Adrenal gland (tissue), 19 donors: ENCODE measurements at regions of chr16 and their contacts with region 1.

Region 1: GRCh38 chr16:30112197-30113030 is 923 bp downstream of the GDPD3 start:
- DNase-seq: peak; percentile 56 to 82 (median 69)
- H3K4me3 ChIP-seq: no peak overlapping the region
- H3K27ac ChIP-seq: peak overlapping the region in 1 of 5 donors; percentile 74
- H3K4me1 ChIP-seq: peaks cover 0 to 16% of the 10 kb centered on the region in 2 donors
- H3K27me3 ChIP-seq: no peaks in the 10 kb centered on the region
- CTCF ChIP-seq: peak; percentile 46 to 82 (median 60)
- POLR2A ChIP-seq: no peak

Region 2: GRCh38 chr16:29645694-29646187 is 466.7 kb before region 1 on chr16:
- intact Hi-C with region 1: no loop called
- DNase-seq: no peak
- H3K4me3 ChIP-seq: no peak overlapping the region
- H3K27ac ChIP-seq: no peak overlapping the region
- H3K4me1 ChIP-seq: no peaks in the 10 kb centered on the region
- H3K27me3 ChIP-seq: no peaks in the 10 kb centered on the region
- CTCF ChIP-seq: no peak
- POLR2A ChIP-seq: no peak

Region 3: DNA sequence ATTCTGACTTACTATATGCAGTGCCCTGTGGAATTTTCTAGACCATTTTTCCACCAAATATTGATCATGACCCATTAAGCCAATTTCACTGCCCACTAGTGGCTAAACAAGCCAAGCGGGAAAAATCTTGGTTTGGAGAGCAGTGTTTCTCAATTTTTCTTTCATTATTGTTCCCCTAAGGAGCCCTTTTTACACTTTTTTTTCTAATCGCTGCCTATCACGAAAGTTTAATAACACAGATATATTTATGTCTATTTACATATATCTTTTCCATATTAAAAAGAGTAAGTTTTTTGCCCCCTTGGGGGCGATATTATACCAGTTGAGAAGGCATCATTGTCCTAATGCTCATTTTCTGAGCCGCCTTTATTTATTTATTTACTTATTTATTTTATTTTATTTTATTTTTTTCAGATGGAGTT is 70.6 kb before region 1 on chr16:
- intact Hi-C with region 1: no loop called
- DNase-seq: peak in 1 of 7 donors; percentile 30
- H3K4me3 ChIP-seq: no peak overlapping the region
- H3K27ac ChIP-seq: no peak overlapping the region
- H3K4me1 ChIP-seq: no peaks in the 10 kb centered on the region
- H3K27me3 ChIP-seq: no peaks in the 10 kb centered on the region
- CTCF ChIP-seq: peak in 5 of 6 experiments; percentile 17 to 57 (median 51)
- POLR2A ChIP-seq: no peak

Region 4: DNA sequence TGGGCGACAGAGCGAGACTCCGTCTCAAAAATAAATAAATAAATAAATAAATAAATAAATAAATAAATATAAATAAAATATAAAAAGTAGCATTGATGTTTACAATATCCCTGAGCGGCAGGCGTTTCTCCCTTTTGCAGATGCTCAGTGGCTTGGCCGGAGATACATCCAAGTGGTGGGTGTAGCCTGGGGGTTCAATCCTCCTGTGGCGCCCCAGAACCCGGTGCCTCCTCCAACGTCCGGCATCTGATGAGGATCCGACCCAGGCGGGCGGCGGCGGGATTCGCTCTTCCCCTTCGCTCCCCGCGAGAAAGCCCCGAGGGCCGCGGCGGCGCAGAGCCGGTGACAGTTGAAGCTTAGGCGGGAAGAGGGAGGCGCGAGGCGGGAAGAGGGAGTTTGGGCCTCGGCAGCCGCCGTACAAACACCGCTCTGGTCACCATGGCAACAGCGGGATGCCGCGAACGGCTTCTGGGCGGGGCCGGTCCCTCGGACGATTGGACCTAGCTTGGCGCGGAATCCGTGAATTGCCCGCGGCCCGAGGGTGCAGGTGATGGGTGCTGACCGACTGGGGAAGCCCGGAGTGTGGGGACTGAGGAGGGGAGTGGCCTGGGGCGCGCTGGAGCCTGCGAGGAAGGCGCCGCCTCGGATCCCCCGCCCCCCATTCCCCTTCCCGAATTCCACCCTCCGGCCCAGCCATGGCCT is 59.6 kb before region 1 on chr16:
- intact Hi-C with region 1: no loop called
- DNase-seq: peak; percentile 94 to 97 (median 95)
- H3K4me3 ChIP-seq: peak overlapping the region in 3 of 4 donors; percentile 32 to 70 (median 48)
- H3K27ac ChIP-seq: peak overlapping the region in 2 of 5 donors; percentile 26 to 60
- H3K4me1 ChIP-seq: peaks cover 0 to 13% of the 10 kb centered on the region in 2 donors
- H3K27me3 ChIP-seq: no peaks in the 10 kb centered on the region
- CTCF ChIP-seq: no peak
- POLR2A ChIP-seq: no peak

Region 5: GRCh38 chr16:30166202-30166902 is 53.9 kb after region 1 on chr16:
- intact Hi-C with region 1: loop called in 1 of 2 experiments (anchors 10 kb)
- DNase-seq: no peak
- H3K4me3 ChIP-seq: no peak overlapping the region
- H3K27ac ChIP-seq: no peak overlapping the region
- H3K4me1 ChIP-seq: no peaks in the 10 kb centered on the region
- H3K27me3 ChIP-seq: no peaks in the 10 kb centered on the region
- CTCF ChIP-seq: no peak
- POLR2A ChIP-seq: no peak